SK-N-SH (cell line): ENCODE measurements at regions of chr12 and their contacts with region 1.

Region 1: DNA sequence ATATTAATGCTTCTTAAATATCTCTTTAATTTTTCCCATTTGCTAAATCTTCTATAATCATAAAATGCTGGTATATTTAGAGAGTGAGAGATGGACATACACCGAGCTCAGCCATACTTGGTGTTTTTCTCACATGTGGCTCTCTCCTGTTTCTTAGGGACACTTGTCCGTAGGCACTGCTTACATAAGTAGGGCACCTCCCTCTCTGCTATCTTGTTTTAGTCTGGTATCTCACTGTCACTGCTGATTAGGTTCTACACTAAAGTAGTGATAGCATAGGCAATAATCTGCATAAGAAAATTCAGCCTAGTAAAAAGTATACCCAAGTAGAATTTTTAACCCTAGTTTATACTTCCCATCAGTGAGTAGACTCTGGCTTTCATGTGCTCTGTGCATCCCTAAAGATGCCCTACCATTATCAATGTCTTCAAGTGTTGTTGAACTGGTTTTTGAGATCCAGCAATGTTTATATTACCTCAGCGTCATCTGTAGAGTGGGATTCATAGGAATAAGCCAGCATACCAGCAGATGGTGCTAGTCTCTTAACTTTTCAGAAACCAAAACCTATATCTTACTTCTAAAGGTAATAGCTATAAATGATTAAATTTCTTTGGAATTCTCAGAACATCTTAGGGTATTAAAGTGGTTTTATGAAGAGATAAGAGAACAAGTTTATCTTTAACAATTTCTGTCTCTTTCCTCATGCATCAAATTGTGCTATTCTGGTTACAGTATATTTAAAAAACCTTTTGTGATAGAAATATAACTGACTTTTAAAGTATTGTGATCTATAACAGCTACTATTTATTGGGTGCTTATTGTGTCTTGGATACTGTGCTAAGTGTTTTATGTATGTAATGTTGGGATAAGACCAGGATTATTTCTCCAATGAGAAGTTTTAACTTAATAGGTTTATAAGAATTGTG is 32.9 kb downstream of the ARID2 start:
- DNase-seq: peak; percentile 36
- H3K4me3 ChIP-seq: no peak overlapping the region; a peak in 1 of 4 replicates
- H3K27ac ChIP-seq: no peak overlapping the region; a peak in 1 of 4 replicates
- H3K4me1 ChIP-seq: peaks cover 0 to 2% of the 10 kb centered on the region in 2 experiments; a peak in 2 of 4 replicates
- H3K27me3 ChIP-seq: no peaks in the 10 kb centered on the region
- CTCF ChIP-seq: peak; percentile 76
- EP300 ChIP-seq: no peak
- RAD21 ChIP-seq: peak; percentile 73

Region 2: DNA sequence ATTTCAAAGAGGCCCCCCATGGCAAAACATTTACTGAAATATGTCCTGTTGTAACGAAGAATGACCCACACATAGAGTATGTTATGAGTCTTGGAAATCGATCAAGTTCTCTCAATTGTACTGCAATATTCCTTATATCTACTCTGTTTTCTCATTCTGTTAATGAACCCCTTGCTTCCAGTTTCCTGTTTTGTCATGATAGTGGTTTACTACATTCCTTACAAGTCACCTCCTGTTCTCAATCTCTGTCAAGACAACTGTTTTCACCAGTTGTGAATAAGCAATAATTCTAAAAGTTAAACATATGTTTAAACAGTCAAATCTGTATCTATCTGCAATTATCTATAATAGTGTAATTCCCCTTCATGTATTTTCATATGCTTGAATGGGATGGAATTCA is 49.4 kb before region 1 on chr12:
- CTCF ChIA-PET with region 1: no interaction called
- POLR2A ChIA-PET with region 1: no interaction called
- DNase-seq: no peak
- H3K4me3 ChIP-seq: no peak overlapping the region
- H3K27ac ChIP-seq: no peak overlapping the region
- H3K4me1 ChIP-seq: no peaks in the 10 kb centered on the region
- H3K27me3 ChIP-seq: no peaks in the 10 kb centered on the region
- CTCF ChIP-seq: no peak
- EP300 ChIP-seq: no peak
- RAD21 ChIP-seq: no peak

Region 3: GRCh38 chr12:45745861-45746277 is 16.6 kb before region 1 on chr12:
- CTCF ChIA-PET with region 1: interaction called, 11 read pairs
- POLR2A ChIA-PET with region 1: no interaction called
- DNase-seq: peak; percentile 39
- H3K4me3 ChIP-seq: no peak overlapping the region
- H3K27ac ChIP-seq: no peak overlapping the region
- H3K4me1 ChIP-seq: no peaks in the 10 kb centered on the region; a peak in 1 of 4 replicates
- H3K27me3 ChIP-seq: no peaks in the 10 kb centered on the region
- CTCF ChIP-seq: peak; percentile 56
- EP300 ChIP-seq: no peak
- RAD21 ChIP-seq: peak; percentile 35; the same call in 1 of the 2 replicates

Region 4: GRCh38 chr12:45775964-45776363 is 13.5 kb after region 1 on chr12:
- CTCF ChIA-PET with region 1: interaction called, 20 read pairs
- POLR2A ChIA-PET with region 1: no interaction called
- DNase-seq: no peak
- H3K4me3 ChIP-seq: no peak overlapping the region
- H3K27ac ChIP-seq: no peak overlapping the region
- H3K4me1 ChIP-seq: peaks cover 0 to 6% of the 10 kb centered on the region in 2 experiments; a peak in 2 of 4 replicates
- H3K27me3 ChIP-seq: no peaks in the 10 kb centered on the region
- CTCF ChIP-seq: no peak
- EP300 ChIP-seq: no peak
- RAD21 ChIP-seq: no peak